Calu3 (cell line): ENCODE measurements at regions of chr11 and their contacts with region 1.

Region 1: GRCh38 chr11:29328961-29329441 is 687.8 kb downstream of the KCNA4 start:
- DNase-seq: peak; percentile 24
- H3K4me3 Mint-ChIP-seq: no peak overlapping the region
- H3K27ac Mint-ChIP-seq: no peak overlapping the region
- H3K4me1 Mint-ChIP-seq: peaks cover 36% of the 10 kb centered on the region
- H3K27me3 Mint-ChIP-seq: no peaks in the 10 kb centered on the region
- CTCF ChIP-seq: peak; percentile 73

Region 2: GRCh38 chr11:29260939-29261705 is 67.9 kb before region 1 on chr11:
- CTCF ChIA-PET with region 1: interaction called, 19 read pairs
- intact Hi-C with region 1: no loop called
- DNase-seq: peak; percentile 59
- H3K4me3 Mint-ChIP-seq: no peak overlapping the region
- H3K27ac Mint-ChIP-seq: no peak overlapping the region
- H3K4me1 Mint-ChIP-seq: peaks cover 17% of the 10 kb centered on the region
- H3K27me3 Mint-ChIP-seq: no peaks in the 10 kb centered on the region
- CTCF ChIP-seq: no peak

Region 3: DNA sequence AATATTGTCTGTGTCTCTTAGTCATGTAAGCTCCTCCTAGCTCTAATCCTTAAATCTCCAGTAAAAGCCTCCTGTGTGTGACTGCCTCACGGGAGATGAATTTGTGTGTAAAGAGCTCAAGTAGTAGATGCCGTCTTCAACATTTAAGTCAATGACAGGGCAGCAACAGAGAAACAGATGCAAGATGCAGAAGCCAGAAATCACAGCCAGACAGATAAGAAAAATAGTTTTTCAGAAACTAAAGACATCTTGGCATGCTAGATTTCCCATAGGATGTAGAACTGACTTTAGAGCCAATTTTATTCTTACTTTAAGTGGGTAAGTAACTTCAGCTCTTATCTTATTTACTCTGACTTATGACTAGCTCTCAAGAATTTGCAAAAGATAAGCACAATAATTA is 35.0 kb after region 1 on chr11:
- CTCF ChIA-PET with region 1: no interaction called
- intact Hi-C with region 1: no loop called
- DNase-seq: no peak
- H3K4me3 Mint-ChIP-seq: no peak overlapping the region
- H3K27ac Mint-ChIP-seq: no peak overlapping the region
- H3K4me1 Mint-ChIP-seq: no peaks in the 10 kb centered on the region
- H3K27me3 Mint-ChIP-seq: no peaks in the 10 kb centered on the region
- CTCF ChIP-seq: no peak

Region 4: GRCh38 chr11:29482527-29482926 is 153.5 kb after region 1 on chr11:
- CTCF ChIA-PET with region 1: no interaction called
- intact Hi-C with region 1: no loop called
- DNase-seq: no peak
- H3K4me3 Mint-ChIP-seq: no peak overlapping the region
- H3K27ac Mint-ChIP-seq: no peak overlapping the region
- H3K4me1 Mint-ChIP-seq: no peaks in the 10 kb centered on the region
- H3K27me3 Mint-ChIP-seq: no peaks in the 10 kb centered on the region
- CTCF ChIP-seq: no peak